AG04449 (cell line): ENCODE measurements at regions of chr2 and their contacts with region 1.

Region 1: GRCh38 chr2:60530660-60531281 is 22.7 kb downstream of the BCL11A start:
- DNase-seq: no peak
- H3K4me3 ChIP-seq: no peak overlapping the region
- CTCF ChIP-seq: no peak

Region 2: GRCh38 chr2:60544062-60544461 is 13.3 kb after region 1 on chr2:
- CTCF ChIA-PET with region 1: interaction called, 26 read pairs
- POLR2A ChIA-PET with region 1: no interaction called
- DNase-seq: no peak
- H3K4me3 ChIP-seq: no peak overlapping the region; the same call in 1 of the 2 replicates
- CTCF ChIP-seq: no peak